Activated naive CD4-positive, alpha-beta T cell treated with anti-CD3 and anti-CD28 coated beads for 36 hours (primary cell): ENCODE measurements at regions of chr7 and their contacts with region 1.

Region 1: GRCh38 chr7:104923010-104923421 is 91.0 kb upstream of the KMT2E start:
- DNase-seq: peak; percentile 90
- H3K4me3 Mint-ChIP-seq: no peak overlapping the region
- H3K27ac Mint-ChIP-seq: peak overlapping the region; percentile 61
- H3K4me1 Mint-ChIP-seq: peaks cover 4% of the 10 kb centered on the region
- H3K27me3 Mint-ChIP-seq: no peaks in the 10 kb centered on the region

Region 2: GRCh38 chr7:104231054-104232046 is 691.7 kb before region 1 on chr7:
- CTCF ChIA-PET with region 1: interaction called, 28 read pairs
- intact Hi-C with region 1: loop called (anchors 1 kb)
- DNase-seq: peak; percentile 56
- H3K4me3 Mint-ChIP-seq: no peak overlapping the region
- H3K27ac Mint-ChIP-seq: no peak overlapping the region
- H3K4me1 Mint-ChIP-seq: no peaks in the 10 kb centered on the region
- H3K27me3 Mint-ChIP-seq: peaks cover 14% of the 10 kb centered on the region

Region 3: GRCh38 chr7:104653825-104654402 is 269.1 kb before region 1 on chr7:
- CTCF ChIA-PET with region 1: no interaction called
- intact Hi-C with region 1: no loop called
- DNase-seq: no peak
- H3K4me3 Mint-ChIP-seq: no peak overlapping the region
- H3K27ac Mint-ChIP-seq: no peak overlapping the region
- H3K4me1 Mint-ChIP-seq: no peaks in the 10 kb centered on the region
- H3K27me3 Mint-ChIP-seq: peaks cover 2% of the 10 kb centered on the region

Region 4: DNA sequence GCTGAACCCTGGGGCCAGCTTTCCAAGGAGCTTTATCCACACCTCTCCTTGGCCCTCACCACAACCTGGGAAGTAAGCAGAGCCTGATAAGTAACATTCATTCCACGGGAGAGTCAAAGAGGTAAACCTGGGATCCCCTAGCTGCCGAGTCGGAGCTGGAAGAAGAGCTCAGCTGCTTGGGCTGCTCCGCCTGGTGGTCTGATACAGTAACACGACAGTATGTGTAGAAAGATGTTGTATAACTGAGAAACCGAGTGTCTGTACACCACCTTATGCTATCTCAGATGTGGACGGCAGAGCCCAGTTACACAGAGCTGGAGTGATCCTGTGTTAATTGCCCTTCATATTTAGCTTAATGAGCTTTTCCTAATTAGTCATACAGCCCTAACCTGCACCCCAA is 60.3 kb before region 1 on chr7:
- CTCF ChIA-PET with region 1: interaction called, 4 read pairs
- intact Hi-C with region 1: loop called (anchors 2 kb)
- DNase-seq: no peak
- H3K4me3 Mint-ChIP-seq: no peak overlapping the region
- H3K27ac Mint-ChIP-seq: no peak overlapping the region
- H3K4me1 Mint-ChIP-seq: peaks cover 10% of the 10 kb centered on the region
- H3K27me3 Mint-ChIP-seq: peaks cover 3% of the 10 kb centered on the region

Region 5: DNA sequence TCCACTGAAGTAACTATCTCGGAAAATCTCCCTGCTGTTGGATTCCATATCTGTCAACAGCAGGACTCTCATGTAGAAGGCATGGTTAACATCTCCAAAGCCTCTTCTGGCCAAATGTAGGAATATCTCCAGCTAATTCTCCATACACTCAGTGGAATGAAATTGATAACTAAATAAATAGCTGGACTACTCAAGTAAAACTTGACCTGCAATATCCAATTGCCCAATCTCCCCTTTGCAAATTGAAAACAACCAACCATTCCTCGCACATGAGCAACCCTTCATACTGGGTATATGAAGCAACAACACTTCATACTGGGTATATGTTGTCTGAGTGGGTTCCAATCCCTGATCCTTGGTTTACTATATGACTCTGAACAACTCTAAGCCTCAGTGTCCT is 14.4 kb before region 1 on chr7:
- CTCF ChIA-PET with region 1: interaction called, 10 read pairs
- intact Hi-C with region 1: no loop called
- DNase-seq: no peak
- H3K4me3 Mint-ChIP-seq: no peak overlapping the region
- H3K27ac Mint-ChIP-seq: no peak overlapping the region
- H3K4me1 Mint-ChIP-seq: no peaks in the 10 kb centered on the region
- H3K27me3 Mint-ChIP-seq: no peaks in the 10 kb centered on the region

Region 6: GRCh38 chr7:105098863-105099515 is 176.0 kb after region 1 on chr7:
- CTCF ChIA-PET with region 1: no interaction called
- intact Hi-C with region 1: loop called (anchors 1 kb)
- DNase-seq: no peak
- H3K4me3 Mint-ChIP-seq: no peak overlapping the region
- H3K27ac Mint-ChIP-seq: peak overlapping the region; percentile 73
- H3K4me1 Mint-ChIP-seq: peaks cover 59% of the 10 kb centered on the region
- H3K27me3 Mint-ChIP-seq: no peaks in the 10 kb centered on the region

Region 7: GRCh38 chr7:105336009-105336408 is 413.0 kb after region 1 on chr7:
- CTCF ChIA-PET with region 1: no interaction called
- intact Hi-C with region 1: loop called (anchors 1 kb)
- DNase-seq: no peak
- H3K4me3 Mint-ChIP-seq: no peak overlapping the region
- H3K27ac Mint-ChIP-seq: no peak overlapping the region
- H3K4me1 Mint-ChIP-seq: peaks cover 27% of the 10 kb centered on the region
- H3K27me3 Mint-ChIP-seq: no peaks in the 10 kb centered on the region

Region 8: GRCh38 chr7:105531792-105532671 is 609.0 kb after region 1 on chr7 and contains the start of gene RINT1:
- CTCF ChIA-PET with region 1: interaction called, 6 read pairs
- intact Hi-C with region 1: loop called (anchors 5 kb)
- DNase-seq: peak; percentile 95
- H3K4me3 Mint-ChIP-seq: peak within 1 kb of the TSS; percentile 83
- H3K27ac Mint-ChIP-seq: peak within 1 kb of the TSS; percentile 85
- H3K4me1 Mint-ChIP-seq: peaks cover 23% of the 10 kb centered on the region
- H3K27me3 Mint-ChIP-seq: no peaks in the 10 kb centered on the region
- total RNA-seq, gene RINT1: 22.1 to 25.2 TPM